ENCODE measurements at regions of chr15 and their contacts with region 1.

Region 1: GRCh38 chr15:45587095-45587860 is at the start of gene BLOC1S6:
- DNase-seq: peak; percentile 95 to 96
- ATAC-seq: peak; percentile 96
- H3K4me3 ChIP-seq: peak within 1 kb of the TSS; percentile 67 to 92
- H3K27ac ChIP-seq: peak within 1 kb of the TSS; percentile 64 to 69
- H3K4me1 ChIP-seq: peaks cover 2 to 4% of the 10 kb centered on the region in 2 donors
- H3K27me3 ChIP-seq: no peaks in the 10 kb centered on the region
- total RNA-seq, gene BLOC1S6: 46.8 to 47.3 TPM

Region 2: DNA sequence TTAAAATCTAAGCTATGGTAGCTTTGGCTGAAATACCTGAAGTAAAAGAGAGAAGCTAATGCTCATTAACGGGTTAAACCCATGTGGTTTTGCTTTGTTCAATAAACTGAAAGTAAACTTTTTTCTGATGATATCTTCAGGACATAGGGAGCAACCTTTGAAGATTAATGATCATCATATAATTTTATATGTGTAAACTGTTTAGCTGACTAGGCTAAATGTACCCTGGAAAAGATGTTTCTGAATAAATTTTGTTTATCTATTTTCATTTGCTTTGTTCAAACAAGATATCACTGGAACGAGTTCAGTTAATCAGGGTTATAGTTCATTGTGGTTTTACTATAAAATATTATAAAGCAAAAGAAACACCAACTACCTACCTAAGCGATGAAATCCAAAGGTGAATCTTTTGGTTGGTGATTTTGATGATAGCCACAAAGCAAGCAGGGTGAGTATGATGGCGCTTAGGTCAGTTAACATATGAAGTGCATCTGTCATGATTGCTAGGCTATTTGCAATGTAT is 76.5 kb before region 1 on chr15:
- intact Hi-C with region 1: no loop called
- DNase-seq: no peak
- ATAC-seq: no peak
- H3K4me3 ChIP-seq: no peak overlapping the region
- H3K27ac ChIP-seq: no peak overlapping the region
- H3K4me1 ChIP-seq: no peaks in the 10 kb centered on the region
- H3K27me3 ChIP-seq: no peaks in the 10 kb centered on the region

Region 3: GRCh38 chr15:45522328-45523160 is 64.7 kb before region 1 on chr15 and contains the start of gene SLC30A4:
- intact Hi-C with region 1: loop called in 1 of 2 experiments (anchors 5 kb)
- DNase-seq: peak; percentile 78 to 88
- ATAC-seq: peak; percentile 92
- H3K4me3 ChIP-seq: peak within 1 kb of the TSS; percentile 76 to 95
- H3K27ac ChIP-seq: peak within 1 kb of the TSS in 1 of 2 donors; percentile 43
- H3K4me1 ChIP-seq: peaks cover 0 to 2% of the 10 kb centered on the region in 2 donors
- H3K27me3 ChIP-seq: no peaks in the 10 kb centered on the region
- total RNA-seq, gene SLC30A4: 8.2 to 10.2 TPM

Region 4: GRCh38 chr15:45634442-45635190 is 47.3 kb after region 1 on chr15 and contains the start of gene SQOR:
- intact Hi-C with region 1: loop called in 1 of 2 experiments (anchors 5 kb)
- DNase-seq: peak; percentile 94
- ATAC-seq: peak; percentile 92
- H3K4me3 ChIP-seq: peak within 1 kb of the TSS; percentile 61
- H3K27ac ChIP-seq: peak within 1 kb of the TSS; percentile 10 to 83
- H3K4me1 ChIP-seq: peaks cover 3 to 5% of the 10 kb centered on the region in 2 donors
- H3K27me3 ChIP-seq: no peaks in the 10 kb centered on the region
- total RNA-seq, gene SQOR: 44.5 to 49.3 TPM

Measured in aorta (tissue), 5 donors.